Kidney (tissue), 22 donors: ENCODE measurements at regions of chr3 and their contacts with region 1.

Region 1: DNA sequence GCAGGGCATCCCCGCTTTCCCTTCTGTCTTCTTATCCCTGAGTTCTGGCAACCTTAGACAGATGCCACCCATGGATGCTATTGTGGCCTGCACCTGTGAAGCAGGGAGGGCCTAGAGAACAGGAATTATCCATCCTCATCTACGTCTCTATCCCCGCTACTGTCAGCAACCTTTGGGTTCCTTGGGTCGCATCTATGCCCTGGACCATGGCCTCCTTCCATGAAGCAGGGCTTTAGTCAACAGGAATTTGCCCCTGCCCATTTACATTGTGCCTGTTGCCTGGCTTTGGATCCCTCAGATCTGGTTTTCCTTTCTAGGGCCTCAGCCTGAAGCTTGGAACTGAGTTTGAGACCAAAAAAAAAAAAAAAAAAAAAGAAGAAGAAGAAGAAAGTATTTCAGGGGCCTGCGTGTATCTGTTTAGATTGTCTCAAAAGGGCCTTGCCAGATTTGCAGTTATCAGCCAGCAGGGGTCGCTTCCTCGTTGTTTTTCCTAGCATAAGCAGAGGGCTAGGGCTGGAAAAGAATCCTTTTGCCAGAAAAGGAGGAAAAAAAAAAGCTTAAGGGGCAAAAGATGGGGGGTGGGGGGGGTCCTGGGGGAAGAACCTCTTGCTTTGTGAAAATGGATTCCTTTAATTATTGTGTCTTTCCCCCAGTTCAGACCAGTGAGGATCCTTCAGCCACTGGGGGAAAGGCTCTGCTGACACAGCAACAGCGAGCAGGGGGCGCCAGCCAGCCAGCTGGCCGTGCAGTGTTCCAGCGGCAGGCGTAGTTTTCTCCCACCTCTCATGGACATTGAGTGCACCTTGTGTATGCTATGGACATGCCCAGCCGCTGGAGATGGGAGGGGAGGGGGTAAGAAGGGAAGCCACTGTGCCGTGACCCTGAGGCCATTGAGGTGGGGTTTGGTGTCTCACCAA is 65.7 kb upstream of the ALDH1L1 start:
- DNase-seq: peak in 4 of 5 donors; percentile 49 to 86 (median 62)
- H3K4me3 ChIP-seq: no peak overlapping the region
- H3K27ac ChIP-seq: no peak overlapping the region
- H3K4me1 ChIP-seq: no peaks in the 10 kb centered on the region
- H3K27me3 ChIP-seq: no peaks in the 10 kb centered on the region
- CTCF ChIP-seq: peak; percentile 62

Region 2: GRCh38 chr3:126113733-126114442 is 132.2 kb before region 1 on chr3:
- intact Hi-C with region 1: no loop called
- DNase-seq: peak in 1 of 5 donors; percentile 28
- H3K4me3 ChIP-seq: no peak overlapping the region
- H3K27ac ChIP-seq: no peak overlapping the region
- H3K4me1 ChIP-seq: no peaks in the 10 kb centered on the region
- H3K27me3 ChIP-seq: no peaks in the 10 kb centered on the region
- CTCF ChIP-seq: no peak

Region 3: DNA sequence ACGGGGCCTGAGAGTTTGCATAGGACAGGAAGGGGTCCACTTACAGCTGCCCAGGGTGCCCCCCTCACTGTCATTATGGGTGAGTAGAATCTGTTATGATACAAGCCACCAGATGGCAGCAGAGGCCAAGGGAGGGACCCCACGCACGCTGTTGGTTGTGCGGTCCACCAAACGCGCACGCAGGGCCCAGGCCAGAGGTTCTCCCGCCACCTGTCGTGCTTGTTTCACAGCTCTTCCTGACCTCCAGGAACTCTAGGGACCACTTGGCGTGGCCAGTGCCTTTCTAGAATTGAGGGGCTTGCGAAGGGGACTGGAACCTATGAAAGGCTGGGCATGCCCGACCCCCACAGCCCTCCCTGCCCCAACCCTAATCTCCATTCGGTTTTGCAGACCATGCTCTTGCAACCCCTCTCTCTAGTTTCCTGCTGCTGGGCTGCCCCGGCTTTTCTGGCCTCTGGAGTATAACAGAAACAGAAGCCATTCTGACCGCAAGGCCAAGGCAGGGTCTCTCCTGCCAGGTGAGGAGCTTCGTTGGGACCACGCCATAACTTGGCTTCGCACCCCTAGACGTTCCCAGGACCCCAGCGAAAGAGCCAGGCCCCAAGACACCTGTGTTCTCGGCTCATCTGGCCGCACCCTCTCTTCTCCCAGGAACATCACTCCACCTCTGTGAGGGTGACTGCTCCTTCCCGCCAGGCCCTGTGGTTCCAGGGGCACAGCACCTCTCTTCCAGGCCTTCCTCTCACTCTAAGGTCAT is 111.7 kb before region 1 on chr3:
- intact Hi-C with region 1: loop called (anchors 10 kb)
- DNase-seq: peak; percentile 70 to 83 (median 78)
- H3K4me3 ChIP-seq: no peak overlapping the region
- H3K27ac ChIP-seq: no peak overlapping the region
- H3K4me1 ChIP-seq: no peaks in the 10 kb centered on the region
- H3K27me3 ChIP-seq: no peaks in the 10 kb centered on the region
- CTCF ChIP-seq: peak; percentile 75

Region 4: DNA sequence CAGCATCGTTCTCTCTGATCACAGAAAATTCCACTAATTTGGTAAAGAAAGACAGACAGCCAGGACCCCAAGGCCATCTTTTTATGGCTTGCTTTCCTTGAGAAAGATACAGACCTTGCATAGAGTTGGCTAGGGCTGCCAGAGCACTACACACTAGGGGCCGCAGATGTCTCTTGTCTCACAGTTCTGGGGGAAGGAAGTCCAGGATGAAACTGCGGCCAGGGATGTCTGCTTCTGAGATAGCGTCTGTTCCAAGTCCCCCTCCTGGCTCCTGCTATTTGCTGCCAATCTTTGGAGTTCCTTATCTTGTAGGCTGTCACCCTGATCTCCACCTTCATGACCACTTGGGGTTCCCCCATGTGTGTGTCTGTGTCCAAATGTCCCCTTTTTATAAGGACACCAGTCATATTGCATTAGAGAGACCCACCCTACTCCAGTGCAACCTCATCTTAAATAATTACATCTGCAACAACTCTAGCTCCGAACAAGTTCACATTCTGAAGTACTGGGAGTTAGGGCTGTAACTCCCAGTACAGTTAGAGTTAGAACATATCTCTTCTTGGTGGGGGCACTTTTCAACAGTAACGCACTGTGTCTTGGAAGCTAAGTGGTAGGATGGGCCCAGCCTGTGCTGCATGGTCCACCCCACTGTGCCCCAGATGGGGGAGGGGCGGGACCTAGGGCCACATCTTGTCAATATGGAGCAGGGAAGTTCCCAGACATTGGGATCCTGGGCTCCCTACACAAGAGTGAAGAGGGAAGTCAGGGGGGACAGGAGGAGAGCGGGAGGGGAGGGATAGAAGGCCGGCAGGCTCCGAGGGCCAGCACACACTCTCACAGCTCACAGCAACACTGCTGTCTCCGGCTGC is 69.0 kb after region 1 on chr3:
- intact Hi-C with region 1: no loop called
- DNase-seq: peak in 3 of 5 donors; percentile 13 to 85 (median 63)
- H3K4me3 ChIP-seq: no peak overlapping the region
- H3K27ac ChIP-seq: no peak overlapping the region
- H3K4me1 ChIP-seq: peaks cover 0 to 13% (median 0%) of the 10 kb centered on the region in 3 donors
- H3K27me3 ChIP-seq: no peaks in the 10 kb centered on the region
- CTCF ChIP-seq: no peak

Region 5: DNA sequence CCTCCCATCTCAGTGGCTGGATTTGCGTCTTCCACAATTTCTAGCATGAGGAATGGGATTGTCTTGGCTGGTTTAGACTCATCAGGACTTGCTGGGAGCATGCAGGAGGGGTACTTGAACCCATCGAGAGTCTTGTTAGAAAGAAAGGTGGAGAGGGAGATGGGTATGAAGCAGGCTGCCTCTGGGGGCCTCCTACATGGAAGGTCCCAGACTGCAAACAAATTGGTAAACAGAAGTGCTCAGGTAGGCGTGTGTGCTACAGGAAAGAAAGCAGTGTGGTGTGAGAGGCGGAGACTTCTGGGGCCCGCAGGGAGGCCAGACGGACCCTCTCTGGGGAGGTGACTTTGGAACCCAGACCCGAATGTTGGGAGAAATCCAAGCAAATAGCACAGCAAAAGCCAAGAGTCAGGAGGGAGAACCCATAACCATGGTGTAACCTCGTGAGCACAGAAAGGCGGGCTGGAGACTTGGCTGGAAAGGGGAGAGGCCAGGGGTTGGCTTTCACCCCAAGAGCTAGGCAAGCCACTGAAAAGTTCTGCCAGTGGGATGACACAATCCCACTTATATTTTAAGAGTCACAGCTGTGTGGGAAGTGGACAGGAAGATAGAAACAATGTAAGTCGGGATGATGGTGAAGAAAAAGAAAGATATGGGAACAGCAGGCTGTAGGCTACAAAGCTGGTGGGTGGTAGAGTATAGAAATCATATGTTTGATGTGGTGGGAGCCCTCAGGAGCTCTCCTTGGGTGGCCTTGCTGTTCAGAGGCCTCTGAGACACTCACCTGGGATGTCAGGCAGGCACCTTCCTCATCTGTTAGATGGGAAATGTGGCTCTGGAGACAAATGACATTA is 1171.9 kb after region 1 on chr3:
- intact Hi-C with region 1: no loop called
- DNase-seq: peak in 1 of 5 donors; percentile 12
- H3K4me3 ChIP-seq: no peak overlapping the region
- H3K27ac ChIP-seq: no peak overlapping the region
- H3K4me1 ChIP-seq: no peaks in the 10 kb centered on the region
- H3K27me3 ChIP-seq: no peaks in the 10 kb centered on the region
- CTCF ChIP-seq: no peak